A549 (cell line): ENCODE measurements at regions of chr2 and their contacts with region 1.

Region 1: DNA sequence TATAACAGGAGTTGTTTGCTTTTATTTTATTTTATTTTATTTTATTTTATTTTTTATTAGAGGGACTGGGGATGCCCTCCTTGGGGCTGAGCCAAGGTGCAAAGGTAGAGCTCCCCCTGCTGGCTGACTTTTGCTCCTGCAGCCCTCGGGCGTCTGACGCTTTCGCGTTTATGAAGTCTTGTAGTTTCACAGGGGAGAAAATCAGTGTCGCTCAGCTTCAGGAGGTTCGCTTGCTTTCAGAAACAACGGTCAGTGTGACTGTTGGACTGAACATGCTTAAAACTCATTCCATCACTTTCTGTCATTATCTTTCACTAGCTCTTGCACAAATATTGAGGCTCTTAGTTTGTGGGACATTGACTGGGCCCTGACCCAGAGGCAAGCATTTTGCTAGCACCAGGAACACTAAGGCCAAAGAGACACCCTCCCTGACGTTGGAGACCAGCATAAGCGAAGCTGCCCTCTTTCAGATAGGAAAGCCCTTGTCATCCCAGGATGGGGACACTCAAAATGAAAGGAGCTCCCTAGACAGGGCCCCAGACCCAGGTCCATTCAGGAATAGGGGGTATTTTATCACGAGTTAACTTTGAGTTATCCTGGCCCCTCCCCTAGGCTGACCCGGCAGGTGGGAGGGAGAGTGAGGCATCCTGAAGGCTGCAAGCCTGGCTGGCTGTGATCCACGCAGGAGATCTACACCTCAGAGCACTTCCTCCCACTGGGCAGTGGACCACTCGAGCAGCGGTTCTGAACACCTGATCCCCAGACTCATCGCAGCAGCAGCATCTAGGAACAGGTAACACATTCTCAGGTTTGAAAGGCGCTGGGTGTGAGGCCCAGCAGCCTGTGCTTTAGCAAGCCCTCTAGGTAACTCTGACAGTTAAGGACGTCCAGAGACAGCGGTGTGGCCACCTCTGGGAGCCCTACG is 34.4 kb downstream of the LGALSL start:
- DNase-seq: peak; percentile 71 to 73
- ATAC-seq: peak; percentile 60 to 91; a peak in 4 of 6 replicates
- H3K4me3 ChIP-seq: no peak overlapping the region
- H3K27ac ChIP-seq: no peak overlapping the region
- H3K4me1 ChIP-seq: no peaks in the 10 kb centered on the region
- CTCF ChIP-seq: peak; percentile 99
- EP300 ChIP-seq: no peak
- POLR2A ChIP-seq: no peak
- RAD21 ChIP-seq: peak; percentile 85 to 89

Region 2: GRCh38 chr2:64052468-64053241 is 435.7 kb before region 1 on chr2:
- CTCF ChIA-PET with region 1: interaction called, 32 read pairs
- POLR2A ChIA-PET with region 1: no interaction called
- DNase-seq: no peak
- ATAC-seq: no peak
- H3K4me3 ChIP-seq: no peak overlapping the region
- H3K27ac ChIP-seq: no peak overlapping the region
- H3K4me1 ChIP-seq: no peaks in the 10 kb centered on the region
- CTCF ChIP-seq: no peak
- EP300 ChIP-seq: no peak
- POLR2A ChIP-seq: no peak
- RAD21 ChIP-seq: no peak

Region 3: GRCh38 chr2:64344976-64345576 is 143.2 kb before region 1 on chr2:
- CTCF ChIA-PET with region 1: interaction called, 24 read pairs
- POLR2A ChIA-PET with region 1: no interaction called
- DNase-seq: no peak
- ATAC-seq: no peak
- H3K4me3 ChIP-seq: no peak overlapping the region
- H3K27ac ChIP-seq: no peak overlapping the region
- H3K4me1 ChIP-seq: 0 out of 3 replicates have a peak, but pooled peaks cover 3% of the 10 kb centered on the region
- CTCF ChIP-seq: no peak
- EP300 ChIP-seq: no peak
- POLR2A ChIP-seq: no peak
- RAD21 ChIP-seq: no peak

Region 4: DNA sequence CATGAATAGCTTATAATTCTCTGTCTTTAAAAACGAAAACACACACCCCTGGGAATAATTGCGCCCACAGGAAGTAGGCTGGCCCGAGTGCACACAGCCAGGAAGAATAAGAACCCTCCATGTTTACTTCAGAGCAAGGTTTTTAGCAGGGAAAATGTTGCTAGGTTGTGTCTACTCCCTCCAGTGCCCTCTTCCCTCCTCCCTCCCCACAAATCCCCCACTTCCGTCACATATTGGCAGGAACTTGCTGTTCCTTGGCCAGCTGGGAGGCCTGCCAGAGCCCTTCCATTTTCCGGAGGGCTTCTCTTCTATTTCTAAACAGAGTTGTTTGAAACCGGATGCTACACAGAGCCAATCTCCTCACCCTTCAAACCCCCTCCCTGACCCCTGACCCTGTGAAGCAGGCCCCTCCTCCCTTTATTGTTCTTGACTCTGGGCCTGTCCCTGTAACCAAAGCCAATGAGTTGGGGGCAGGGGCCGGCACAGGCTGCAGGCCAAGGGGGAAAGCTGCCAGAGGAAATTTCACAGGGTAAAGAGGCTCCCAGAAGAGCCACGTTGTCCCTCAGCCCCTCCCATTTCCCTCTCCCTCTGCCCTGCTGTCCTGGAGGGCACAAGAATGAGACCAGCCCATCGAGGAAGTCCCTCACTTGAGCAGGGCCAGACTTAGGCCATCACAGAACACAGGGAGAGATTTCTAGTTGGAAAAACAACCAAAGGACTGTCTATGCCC is 84.1 kb before region 1 on chr2:
- CTCF ChIA-PET with region 1: interaction called, 13 read pairs
- POLR2A ChIA-PET with region 1: no interaction called
- DNase-seq: no peak
- ATAC-seq: no peak
- H3K4me3 ChIP-seq: no peak overlapping the region
- H3K27ac ChIP-seq: no peak overlapping the region
- H3K4me1 ChIP-seq: peaks cover 32% of the 10 kb centered on the region
- CTCF ChIP-seq: no peak
- EP300 ChIP-seq: no peak
- POLR2A ChIP-seq: no peak
- RAD21 ChIP-seq: no peak

Region 5: GRCh38 chr2:64474121-64474571 is 14.2 kb before region 1 on chr2:
- CTCF ChIA-PET with region 1: interaction called, 92 read pairs
- POLR2A ChIA-PET with region 1: no interaction called
- DNase-seq: no peak
- ATAC-seq: no peak
- H3K4me3 ChIP-seq: no peak overlapping the region
- H3K27ac ChIP-seq: no peak overlapping the region
- H3K4me1 ChIP-seq: no peaks in the 10 kb centered on the region
- CTCF ChIP-seq: no peak
- EP300 ChIP-seq: no peak
- POLR2A ChIP-seq: no peak
- RAD21 ChIP-seq: no peak

Region 6: GRCh38 chr2:64523666-64524603 is 35.6 kb after region 1 on chr2 and contains the start of gene AFTPH:
- CTCF ChIA-PET with region 1: interaction called, 26 read pairs
- POLR2A ChIA-PET with region 1: no interaction called
- DNase-seq: peak; percentile 98 to 99
- ATAC-seq: peak; percentile 95 to 98
- H3K4me3 ChIP-seq: peak within 1 kb of the TSS; percentile 89
- H3K27ac ChIP-seq: peak within 1 kb of the TSS; percentile 86 to 96
- H3K4me1 ChIP-seq: peaks cover 15% of the 10 kb centered on the region; the same call in 2 of the 3 replicates
- CTCF ChIP-seq: no peak; the same call in 2 of the 3 replicates
- EP300 ChIP-seq: no peak
- POLR2A ChIP-seq: peak; percentile 61
- RAD21 ChIP-seq: no peak
- polyA plus RNA-seq, gene AFTPH: 51.4 and 56.6 TPM in 2 replicates

Region 7: GRCh38 chr2:64543008-64543697 is 54.8 kb after region 1 on chr2:
- CTCF ChIA-PET with region 1: no interaction called
- POLR2A ChIA-PET with region 1: no interaction called
- DNase-seq: no peak
- ATAC-seq: no peak; a peak in 1 of 6 replicates
- H3K4me3 ChIP-seq: peak overlapping the region; percentile 12; the same call in 1 of the 3 replicates
- H3K27ac ChIP-seq: peak overlapping the region; percentile 30 to 57; a peak in 4 of 6 replicates
- H3K4me1 ChIP-seq: peaks cover 72% of the 10 kb centered on the region
- CTCF ChIP-seq: no peak
- EP300 ChIP-seq: no peak
- POLR2A ChIP-seq: no peak
- RAD21 ChIP-seq: no peak